ENCODE measurements at regions of chr16 and their contacts with region 1.

Region 1: DNA sequence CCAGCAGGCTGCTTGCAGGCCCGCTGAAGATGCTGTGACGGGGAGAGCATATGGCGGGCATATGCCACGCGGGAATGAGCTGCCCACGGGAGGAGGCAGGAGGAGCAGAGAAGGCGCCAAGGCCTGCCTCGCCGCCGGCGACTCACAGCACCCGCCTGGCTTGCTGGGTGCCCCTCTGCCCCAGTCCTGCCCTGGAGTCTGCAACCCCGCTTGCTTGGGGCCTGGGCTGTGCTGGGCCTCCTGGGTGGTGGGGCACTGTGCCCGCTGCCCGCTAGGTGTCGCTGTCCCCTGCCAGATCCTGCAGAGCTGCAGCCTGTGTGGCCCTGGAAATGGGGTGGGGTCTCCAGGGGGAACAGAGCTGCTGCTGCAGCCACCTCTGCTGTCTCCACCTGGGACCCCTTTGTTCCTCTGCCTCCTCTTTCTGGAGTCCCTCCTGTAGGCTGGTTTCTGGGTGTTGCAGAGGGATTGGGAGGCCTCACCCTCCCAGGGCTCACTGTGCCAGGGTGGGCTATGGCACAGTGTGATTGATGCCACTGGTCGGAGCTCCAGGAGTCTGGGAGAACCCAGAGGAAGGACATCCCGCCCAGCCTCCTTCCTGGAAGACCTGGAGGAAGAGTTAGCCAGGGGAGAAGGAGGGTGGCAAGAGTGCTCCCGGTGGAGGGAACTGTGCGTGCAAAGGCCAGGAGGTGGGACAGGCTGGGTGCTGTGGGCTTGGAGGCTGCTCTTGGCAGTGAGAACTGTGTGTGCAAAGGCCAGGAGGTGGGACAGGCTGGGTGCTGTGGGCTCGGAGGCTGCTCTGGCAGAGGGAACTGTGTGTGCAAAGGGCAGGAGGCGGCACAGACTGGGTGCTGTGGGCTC is 141.0 kb upstream of the CIBAR2 start:
- DNase-seq: peak; percentile 90
- CTCF ChIP-seq: peak; percentile 98

Region 2: GRCh38 chr16:84925092-84925772 is 328.1 kb before region 1 on chr16:
- CTCF ChIA-PET with region 1: no interaction called
- POLR2A ChIA-PET with region 1: no interaction called
- DNase-seq: peak; percentile 77
- CTCF ChIP-seq: peak; percentile 82

Region 3: GRCh38 chr16:85114909-85115567 is 138.3 kb before region 1 on chr16:
- CTCF ChIA-PET with region 1: interaction called, 15 read pairs
- POLR2A ChIA-PET with region 1: no interaction called
- DNase-seq: peak; percentile 93
- CTCF ChIP-seq: peak; percentile 98

Region 4: DNA sequence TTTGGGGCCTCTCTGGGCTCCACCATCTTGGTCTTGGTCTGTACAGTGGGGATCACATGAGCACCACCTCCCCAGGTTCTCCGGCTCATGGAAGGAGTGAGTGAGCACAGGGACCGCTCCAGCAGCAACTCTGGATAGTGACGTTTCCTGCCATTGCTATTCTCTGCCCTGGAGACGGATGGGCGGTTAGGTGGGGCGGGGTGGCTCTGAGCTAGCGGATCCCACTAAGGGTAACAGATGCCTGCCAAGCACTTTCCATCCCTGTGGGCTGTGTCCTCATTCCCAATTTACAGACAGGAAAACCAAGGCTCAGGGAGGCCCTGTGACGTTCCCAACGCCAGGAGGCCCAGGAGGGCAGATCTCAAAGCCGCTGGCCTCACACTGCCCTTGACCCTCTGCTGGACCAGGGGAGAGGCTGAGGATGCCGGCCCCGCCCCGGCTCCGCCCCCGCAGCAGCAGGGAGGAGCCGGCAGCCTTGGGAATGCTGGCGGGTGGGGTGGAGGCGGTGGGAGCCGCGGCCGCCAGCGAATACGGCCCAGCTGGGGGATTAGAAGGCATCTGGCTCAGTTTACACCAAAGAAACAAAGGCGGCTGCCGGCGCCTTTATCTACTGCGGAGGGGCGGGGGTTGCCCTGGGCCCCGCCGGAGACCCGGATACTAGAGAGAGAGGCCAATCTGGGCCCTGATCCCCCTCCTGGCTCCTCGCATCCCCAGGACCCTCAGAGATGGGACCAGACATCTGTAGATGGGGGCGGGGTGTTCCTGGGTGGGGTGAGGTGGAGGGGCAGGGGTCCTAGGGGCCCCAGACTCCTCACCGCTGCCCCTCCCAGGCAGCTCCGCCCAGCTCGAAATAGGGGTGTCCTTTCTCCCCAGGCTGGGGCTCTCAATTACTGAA is 18.8 kb before region 1 on chr16:
- CTCF ChIA-PET with region 1: interaction called, 58 read pairs
- POLR2A ChIA-PET with region 1: no interaction called
- DNase-seq: no peak
- CTCF ChIP-seq: no peak

Region 5: GRCh38 chr16:85286066-85286831 is 32.9 kb after region 1 on chr16:
- CTCF ChIA-PET with region 1: interaction called, 10 read pairs
- POLR2A ChIA-PET with region 1: no interaction called
- DNase-seq: no peak
- CTCF ChIP-seq: no peak

Region 6: DNA sequence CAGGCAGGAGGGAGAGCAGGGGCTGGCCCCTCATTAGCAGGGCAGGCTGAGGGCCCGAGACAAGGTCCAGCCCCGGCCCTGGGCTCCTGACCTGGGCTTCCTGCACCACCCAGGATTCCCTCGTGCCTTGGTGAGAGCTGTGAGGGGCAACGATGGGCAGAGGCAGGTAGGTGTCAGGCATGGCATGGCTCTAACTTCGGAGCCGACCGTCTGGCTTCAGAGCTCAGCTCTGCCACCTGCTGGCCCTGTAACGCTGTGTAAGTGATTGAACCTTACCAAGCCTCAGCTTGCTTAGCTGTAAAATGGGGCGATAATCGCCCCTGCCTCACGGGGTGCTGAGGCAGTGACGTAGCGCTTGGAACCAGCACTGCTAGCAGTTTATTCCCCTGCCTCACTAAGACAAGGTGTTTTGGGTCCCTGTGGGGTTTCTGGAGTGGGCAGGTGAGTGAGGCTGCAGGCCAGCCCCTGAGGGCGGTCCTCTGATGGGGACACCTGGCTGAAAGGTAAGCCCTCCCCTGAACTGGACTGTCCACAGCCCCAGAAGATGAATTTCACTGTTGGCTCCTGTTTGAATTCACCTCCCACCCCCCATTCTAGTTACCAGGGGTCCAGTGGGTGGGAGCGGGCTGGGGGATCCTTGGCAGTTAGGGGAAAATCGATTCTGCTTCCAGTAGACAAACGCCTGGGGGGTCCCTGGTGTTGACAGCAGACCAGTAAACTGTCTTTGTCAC is 175.0 kb after region 1 on chr16:
- CTCF ChIA-PET with region 1: interaction called, 15 read pairs
- POLR2A ChIA-PET with region 1: no interaction called
- DNase-seq: peak; percentile 79
- CTCF ChIP-seq: peak; percentile 82

Region 7: GRCh38 chr16:85503679-85504231 is 250.4 kb after region 1 on chr16:
- CTCF ChIA-PET with region 1: no interaction called
- POLR2A ChIA-PET with region 1: no interaction called
- DNase-seq: no peak
- CTCF ChIP-seq: no peak